Natural killer cell (primary cell): ENCODE measurements at regions of chr15 and their contacts with region 1.

Region 1: GRCh38 chr15:74787251-74788041 is 5.6 kb downstream of the CSK start:
- DNase-seq: peak; percentile 91 to 96
- ATAC-seq: peak; percentile 57 to 83 (median 75)
- H3K4me3 ChIP-seq: peak overlapping the region; percentile 43
- H3K4me3 Mint-ChIP-seq: peak overlapping the region; percentile 97
- H3K27ac ChIP-seq: peak overlapping the region; percentile 94
- H3K27ac Mint-ChIP-seq: peak overlapping the region; percentile 95 to 100
- H3K4me1 ChIP-seq: peaks cover 92% of the 10 kb centered on the region
- H3K4me1 Mint-ChIP-seq: peaks cover 87 to 98% of the 10 kb centered on the region in 2 donors
- H3K27me3 ChIP-seq: no peaks in the 10 kb centered on the region
- H3K27me3 Mint-ChIP-seq: no peaks in the 10 kb centered on the region
- CTCF ChIP-seq: peak; percentile 72

Region 2: DNA sequence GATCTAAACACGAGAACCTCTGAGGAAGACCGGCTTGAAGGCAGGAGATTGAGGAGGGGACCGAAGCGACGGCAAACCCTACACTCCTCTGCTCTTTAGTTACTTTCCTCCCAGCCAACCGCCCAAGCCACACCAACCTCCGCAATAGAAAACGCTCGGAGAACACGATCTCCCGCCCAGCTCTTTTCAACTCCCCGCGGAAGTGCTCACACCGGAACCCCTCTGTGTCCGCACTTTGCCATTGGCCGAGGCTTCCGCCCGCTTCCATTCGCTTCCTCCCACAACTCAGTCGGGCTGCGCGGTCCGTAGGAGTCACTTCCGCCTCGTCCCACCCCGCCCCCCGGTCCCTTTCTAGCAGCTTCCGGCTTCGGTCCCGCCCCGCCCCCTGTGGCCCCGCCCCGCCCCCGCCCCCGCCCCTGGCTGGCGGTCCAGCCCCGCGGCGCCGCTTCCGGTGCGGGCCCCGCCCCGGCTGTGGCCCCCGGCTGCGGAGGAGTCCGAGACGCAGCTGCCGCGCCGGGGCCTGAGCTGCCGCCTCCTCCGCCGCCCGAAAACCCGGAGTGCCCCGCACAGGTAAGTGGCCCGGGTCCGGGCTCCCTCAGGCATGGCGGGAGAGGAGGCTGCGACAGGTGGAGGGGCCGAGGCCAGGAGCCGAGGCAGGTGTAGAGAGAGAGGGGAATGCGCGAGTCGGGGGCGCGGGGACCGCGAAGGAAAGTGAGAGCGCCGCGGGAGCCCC is 246.5 kb before region 1 on chr15 and contains the start of gene ARID3B:
- intact Hi-C with region 1: loop called (anchors 2 kb)
- DNase-seq: peak; percentile 84 to 97
- ATAC-seq: peak; percentile 85 to 97 (median 92)
- H3K4me3 ChIP-seq: peak within 1 kb of the TSS; percentile 92
- H3K4me3 Mint-ChIP-seq: peak within 1 kb of the TSS; percentile 99
- H3K27ac ChIP-seq: peak within 1 kb of the TSS; percentile 82
- H3K27ac Mint-ChIP-seq: peak within 1 kb of the TSS; percentile 92 to 97
- H3K4me1 ChIP-seq: peaks cover 27% of the 10 kb centered on the region
- H3K4me1 Mint-ChIP-seq: peaks cover 51 to 58% of the 10 kb centered on the region in 2 donors
- H3K27me3 ChIP-seq: no peaks in the 10 kb centered on the region
- H3K27me3 Mint-ChIP-seq: no peaks in the 10 kb centered on the region
- CTCF ChIP-seq: no peak
- total RNA-seq, gene ARID3B: 56.4 to 59.2 (median 58.3) TPM

Region 3: GRCh38 chr15:74776821-74777768 is 10.4 kb before region 1 on chr15:
- intact Hi-C with region 1: loop called (anchors 1 kb)
- DNase-seq: peak; percentile 56 to 90
- ATAC-seq: peak; percentile 58 to 68 (median 61)
- H3K4me3 ChIP-seq: no peak overlapping the region
- H3K4me3 Mint-ChIP-seq: peak overlapping the region; percentile 47
- H3K27ac ChIP-seq: peak overlapping the region; percentile 90
- H3K27ac Mint-ChIP-seq: peak overlapping the region; percentile 97 to 98
- H3K4me1 ChIP-seq: peaks cover 76% of the 10 kb centered on the region
- H3K4me1 Mint-ChIP-seq: peaks cover 51 to 59% of the 10 kb centered on the region in 2 donors
- H3K27me3 ChIP-seq: no peaks in the 10 kb centered on the region
- H3K27me3 Mint-ChIP-seq: no peaks in the 10 kb centered on the region
- CTCF ChIP-seq: no peak

Region 4: DNA sequence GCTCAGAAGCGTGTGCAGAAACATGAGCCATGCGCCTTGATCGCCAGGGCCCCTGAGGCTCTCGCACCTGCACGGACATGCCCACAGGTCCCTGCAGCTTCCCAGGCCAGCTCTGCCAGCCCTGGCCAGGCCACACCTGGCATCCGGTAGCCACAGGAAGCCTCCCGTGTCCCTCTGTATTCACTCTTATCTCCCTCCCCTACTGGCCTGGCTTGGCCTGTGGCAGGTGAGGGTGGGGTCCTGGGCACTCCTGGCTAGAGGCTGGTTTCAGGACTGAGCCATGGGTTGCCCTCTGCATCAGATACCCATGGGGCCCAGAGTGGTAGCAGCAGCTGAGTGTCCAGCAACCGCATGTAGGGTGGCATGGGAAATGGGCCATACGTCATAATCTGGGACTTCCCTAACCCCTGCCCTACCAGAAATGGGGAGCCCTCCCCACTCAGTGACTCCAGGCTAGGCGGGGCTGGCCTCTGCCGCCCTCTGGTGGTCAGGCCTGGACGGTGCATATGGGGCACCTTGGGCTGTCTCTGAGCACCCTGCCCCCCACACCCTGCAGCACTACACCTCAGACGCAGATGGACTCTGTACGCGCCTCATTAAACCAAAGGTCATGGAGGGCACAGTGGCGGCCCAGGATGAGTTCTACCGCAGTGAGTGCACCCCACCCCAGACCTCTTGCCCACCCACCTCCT is 12.6 kb after region 1 on chr15:
- intact Hi-C with region 1: loop called (anchors 1 kb)
- DNase-seq: peak; percentile 90 to 94
- ATAC-seq: peak; percentile 89 to 98 (median 93)
- H3K4me3 ChIP-seq: no peak overlapping the region
- H3K4me3 Mint-ChIP-seq: peak overlapping the region; percentile 75
- H3K27ac ChIP-seq: peak overlapping the region; percentile 97
- H3K27ac Mint-ChIP-seq: peak overlapping the region; percentile 92 to 93
- H3K4me1 ChIP-seq: peaks cover 63% of the 10 kb centered on the region
- H3K4me1 Mint-ChIP-seq: peaks cover 31 to 57% of the 10 kb centered on the region in 2 donors
- H3K27me3 ChIP-seq: no peaks in the 10 kb centered on the region
- H3K27me3 Mint-ChIP-seq: no peaks in the 10 kb centered on the region
- CTCF ChIP-seq: peak; percentile 94

Region 5: DNA sequence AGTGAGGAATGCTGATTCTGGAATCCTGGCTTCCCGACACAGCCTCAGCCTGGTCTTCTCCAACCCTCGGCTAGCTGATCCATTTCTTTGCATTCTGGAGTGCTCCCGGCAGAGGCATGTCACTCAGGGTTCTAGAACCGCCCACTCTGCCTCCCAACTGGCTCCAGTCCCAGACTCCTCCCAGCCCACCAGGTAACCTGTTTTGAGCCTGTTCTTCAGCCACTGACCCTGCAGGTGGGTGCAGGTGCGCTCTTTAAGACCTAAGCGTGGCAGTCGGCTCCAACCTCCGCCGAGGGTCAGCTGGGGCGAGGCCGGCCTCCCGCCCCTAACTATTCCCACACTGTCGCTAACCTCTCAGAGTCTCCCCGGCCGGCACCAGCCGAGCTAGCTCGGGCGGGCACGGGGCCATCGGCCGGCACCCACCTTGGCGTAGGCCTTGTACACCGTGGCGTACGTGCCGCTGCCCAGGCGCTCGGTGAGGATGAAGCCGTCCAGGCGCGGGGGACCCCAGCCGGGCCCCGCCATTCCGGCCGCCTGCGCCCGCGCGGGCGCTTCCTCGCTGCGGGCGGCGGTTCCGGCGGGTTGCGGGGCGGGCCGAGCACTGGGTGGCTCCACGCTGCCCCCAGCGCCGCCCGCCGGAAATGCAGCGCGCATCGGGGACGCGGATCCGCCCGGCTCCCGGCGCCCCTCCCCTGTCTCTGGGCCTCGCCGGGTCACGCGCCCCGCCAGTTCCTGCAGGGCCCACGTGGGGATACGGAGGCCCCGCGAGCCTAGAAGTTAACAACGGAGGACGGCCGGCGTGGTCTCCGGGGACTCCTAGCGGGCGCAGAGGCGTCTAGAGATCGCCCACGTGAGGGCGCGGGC is 55.4 kb after region 1 on chr15 and contains the start of gene ULK3:
- intact Hi-C with region 1: loop called (anchors 5 kb)
- DNase-seq: peak; percentile 93 to 95
- ATAC-seq: peak; percentile 92 to 98 (median 93)
- H3K4me3 ChIP-seq: peak within 1 kb of the TSS; percentile 90
- H3K4me3 Mint-ChIP-seq: peak within 1 kb of the TSS; percentile 91
- H3K27ac ChIP-seq: peak within 1 kb of the TSS; percentile 80
- H3K27ac Mint-ChIP-seq: peak within 1 kb of the TSS; percentile 91
- H3K4me1 ChIP-seq: peaks cover 48% of the 10 kb centered on the region
- H3K4me1 Mint-ChIP-seq: peaks cover 18 to 49% of the 10 kb centered on the region in 2 donors
- H3K27me3 ChIP-seq: no peaks in the 10 kb centered on the region
- H3K27me3 Mint-ChIP-seq: no peaks in the 10 kb centered on the region
- CTCF ChIP-seq: peak; percentile 70
- total RNA-seq, gene ULK3: 54.8 to 75.1 (median 64.7) TPM

Region 6: DNA sequence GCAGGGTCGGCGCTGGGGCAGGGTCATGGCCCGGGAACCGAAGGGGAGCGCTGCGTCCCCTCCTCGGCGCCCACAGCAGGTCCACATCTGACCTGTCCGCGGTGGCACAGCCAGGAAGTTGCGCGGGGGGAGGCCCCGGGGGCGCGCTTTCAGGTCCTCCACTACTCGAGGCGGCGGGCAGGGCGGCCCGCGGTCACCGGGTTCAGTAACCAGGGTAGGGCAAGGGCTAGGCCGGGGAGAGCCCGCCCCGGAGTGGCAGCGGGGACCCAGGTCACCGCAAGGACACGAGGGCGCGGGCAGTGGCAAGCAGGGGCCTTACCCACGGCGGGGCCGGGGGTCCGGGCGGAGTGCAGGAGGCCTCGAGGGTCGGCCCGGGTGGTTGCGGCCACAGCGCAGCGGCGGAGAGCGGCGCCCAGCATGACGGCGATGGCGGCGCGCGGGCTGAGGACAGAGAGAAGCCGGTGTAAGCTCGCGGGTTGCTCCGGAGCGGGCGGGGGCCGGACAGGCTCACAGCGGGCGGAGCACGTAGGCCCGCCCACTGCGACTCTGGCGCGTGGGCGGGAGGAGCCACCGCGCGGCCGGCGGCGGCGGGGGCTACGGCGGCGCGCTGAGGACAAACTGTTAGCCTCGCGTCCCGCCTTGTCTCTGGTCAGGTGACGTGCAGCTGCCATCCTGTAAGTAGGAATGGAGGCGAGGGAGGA is 150.3 kb after region 1 on chr15 and contains the start of gene COX5A:
- intact Hi-C with region 1: loop called (anchors 5 kb)
- DNase-seq: peak; percentile 90 to 96
- ATAC-seq: peak; percentile 94 to 99 (median 96)
- H3K4me3 ChIP-seq: peak within 1 kb of the TSS; percentile 90
- H3K4me3 Mint-ChIP-seq: peak within 1 kb of the TSS; percentile 93
- H3K27ac ChIP-seq: peak within 1 kb of the TSS; percentile 83
- H3K27ac Mint-ChIP-seq: peak within 1 kb of the TSS; percentile 84 to 85
- H3K4me1 ChIP-seq: peaks cover 20% of the 10 kb centered on the region
- H3K4me1 Mint-ChIP-seq: peaks cover 23 to 28% of the 10 kb centered on the region in 2 donors
- H3K27me3 ChIP-seq: no peaks in the 10 kb centered on the region
- H3K27me3 Mint-ChIP-seq: no peaks in the 10 kb centered on the region
- CTCF ChIP-seq: no peak
- total RNA-seq, gene COX5A: 69.7 to 90.0 (median 76.9) TPM

Region 7: GRCh38 chr15:75008221-75008625 is 220.8 kb after region 1 on chr15:
- intact Hi-C with region 1: no loop called
- DNase-seq: no peak
- ATAC-seq: no peak
- H3K4me3 ChIP-seq: no peak overlapping the region
- H3K4me3 Mint-ChIP-seq: no peak overlapping the region
- H3K27ac ChIP-seq: peak overlapping the region; percentile 30
- H3K27ac Mint-ChIP-seq: no peak overlapping the region
- H3K4me1 ChIP-seq: peaks cover 12% of the 10 kb centered on the region
- H3K4me1 Mint-ChIP-seq: no peaks in the 10 kb centered on the region
- H3K27me3 ChIP-seq: peaks cover 2% of the 10 kb centered on the region
- H3K27me3 Mint-ChIP-seq: peaks cover 3 to 8% of the 10 kb centered on the region in 2 donors
- CTCF ChIP-seq: no peak

Region 8: GRCh38 chr15:75453703-75454470 is 666.4 kb after region 1 on chr15:
- intact Hi-C with region 1: loop called (anchors 10 kb)
- DNase-seq: peak; percentile 97 to 99
- ATAC-seq: peak; percentile 43 to 67 (median 51)
- H3K4me3 ChIP-seq: peak overlapping the region; percentile 92
- H3K4me3 Mint-ChIP-seq: peak overlapping the region; percentile 98
- H3K27ac ChIP-seq: peak overlapping the region; percentile 96
- H3K27ac Mint-ChIP-seq: peak overlapping the region; percentile 98 to 99
- H3K4me1 ChIP-seq: peaks cover 38% of the 10 kb centered on the region
- H3K4me1 Mint-ChIP-seq: peaks cover 45 to 49% of the 10 kb centered on the region in 2 donors
- H3K27me3 ChIP-seq: no peaks in the 10 kb centered on the region
- H3K27me3 Mint-ChIP-seq: no peaks in the 10 kb centered on the region
- CTCF ChIP-seq: no peak